ENCODE measurements at regions of chr7 and their contacts with region 1.

Region 1: GRCh38 chr7:98795741-98796493 is 73.9 kb downstream of the TMEM130 start:
- DNase-seq: no peak
- ATAC-seq: no peak
- H3K4me3 ChIP-seq: no peak overlapping the region
- H3K4me3 Mint-ChIP-seq: no peak overlapping the region
- H3K27ac ChIP-seq: no peak overlapping the region
- H3K27ac Mint-ChIP-seq: no peak overlapping the region
- H3K4me1 ChIP-seq: no peaks in the 10 kb centered on the region
- H3K4me1 Mint-ChIP-seq: peaks cover 4% of the 10 kb centered on the region
- H3K27me3 ChIP-seq: peaks cover 0 to 14% (median 0%) of the 10 kb centered on the region in 4 experiments
- H3K27me3 Mint-ChIP-seq: peaks cover 22% of the 10 kb centered on the region
- CTCF ChIP-seq: no peak

Region 2: GRCh38 chr7:98703916-98704315 is 92.0 kb before region 1 on chr7:
- CTCF ChIA-PET with region 1: no interaction called
- POLR2A ChIA-PET with region 1: no interaction called
- intact Hi-C with region 1: no loop called
- DNase-seq: no peak
- ATAC-seq: no peak
- H3K4me3 ChIP-seq: no peak overlapping the region
- H3K4me3 Mint-ChIP-seq: no peak overlapping the region
- H3K27ac ChIP-seq: no peak overlapping the region
- H3K27ac Mint-ChIP-seq: no peak overlapping the region
- H3K4me1 ChIP-seq: no peaks in the 10 kb centered on the region
- H3K4me1 Mint-ChIP-seq: no peaks in the 10 kb centered on the region
- H3K27me3 ChIP-seq: peaks cover 0 to 11% (median 0%) of the 10 kb centered on the region in 4 experiments
- H3K27me3 Mint-ChIP-seq: peaks cover 34% of the 10 kb centered on the region
- CTCF ChIP-seq: no peak

Region 3: DNA sequence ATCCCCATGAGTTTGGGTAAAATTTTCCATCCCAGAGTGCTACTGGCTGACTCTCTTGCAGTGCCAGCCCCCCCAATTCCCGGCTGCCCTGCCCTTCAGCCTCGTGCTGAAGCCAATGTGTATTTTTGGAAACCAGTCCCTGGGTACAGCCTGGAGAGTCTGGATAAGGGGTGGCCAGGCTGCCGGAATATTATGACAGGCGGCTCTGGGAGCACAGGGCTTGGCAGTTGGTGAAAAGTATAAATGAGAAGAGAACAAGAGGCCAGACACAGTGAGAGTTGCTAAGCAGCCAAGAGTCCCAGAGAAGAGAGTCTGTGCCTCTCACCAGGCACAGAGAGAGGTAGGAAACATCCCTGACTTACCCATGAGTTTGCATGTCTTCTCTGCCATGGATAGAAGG is 20.3 kb after region 1 on chr7:
- CTCF ChIA-PET with region 1: no interaction called
- POLR2A ChIA-PET with region 1: no interaction called
- intact Hi-C with region 1: loop called (anchors 1 kb)
- DNase-seq: no peak
- ATAC-seq: no peak
- H3K4me3 ChIP-seq: no peak overlapping the region
- H3K4me3 Mint-ChIP-seq: no peak overlapping the region
- H3K27ac ChIP-seq: no peak overlapping the region
- H3K27ac Mint-ChIP-seq: no peak overlapping the region
- H3K4me1 ChIP-seq: no peaks in the 10 kb centered on the region
- H3K4me1 Mint-ChIP-seq: no peaks in the 10 kb centered on the region
- H3K27me3 ChIP-seq: peaks cover 0 to 12% (median 0%) of the 10 kb centered on the region in 4 experiments
- H3K27me3 Mint-ChIP-seq: peaks cover 29% of the 10 kb centered on the region
- CTCF ChIP-seq: no peak

Measured in B cell (primary cell).